ENCODE measurements at regions of chr5 and their contacts with region 1.

Region 1: GRCh38 chr5:39714036-39714698 is 289.4 kb upstream of the DAB2 start:
- DNase-seq: peak; percentile 52
- ATAC-seq: peak; percentile 51
- H3K4me3 Mint-ChIP-seq: no peak overlapping the region
- H3K27ac Mint-ChIP-seq: no peak overlapping the region
- H3K4me1 Mint-ChIP-seq: no peaks in the 10 kb centered on the region
- H3K27me3 Mint-ChIP-seq: peaks cover 8% of the 10 kb centered on the region

Region 2: GRCh38 chr5:38060354-38060753 is 1653.8 kb before region 1 on chr5:
- CTCF ChIA-PET with region 1: no interaction called
- POLR2A ChIA-PET with region 1: no interaction called
- intact Hi-C with region 1: no loop called
- DNase-seq: no peak
- ATAC-seq: no peak
- H3K4me3 Mint-ChIP-seq: no peak overlapping the region
- H3K27ac Mint-ChIP-seq: no peak overlapping the region
- H3K4me1 Mint-ChIP-seq: no peaks in the 10 kb centered on the region
- H3K27me3 Mint-ChIP-seq: no peaks in the 10 kb centered on the region

Region 3: DNA sequence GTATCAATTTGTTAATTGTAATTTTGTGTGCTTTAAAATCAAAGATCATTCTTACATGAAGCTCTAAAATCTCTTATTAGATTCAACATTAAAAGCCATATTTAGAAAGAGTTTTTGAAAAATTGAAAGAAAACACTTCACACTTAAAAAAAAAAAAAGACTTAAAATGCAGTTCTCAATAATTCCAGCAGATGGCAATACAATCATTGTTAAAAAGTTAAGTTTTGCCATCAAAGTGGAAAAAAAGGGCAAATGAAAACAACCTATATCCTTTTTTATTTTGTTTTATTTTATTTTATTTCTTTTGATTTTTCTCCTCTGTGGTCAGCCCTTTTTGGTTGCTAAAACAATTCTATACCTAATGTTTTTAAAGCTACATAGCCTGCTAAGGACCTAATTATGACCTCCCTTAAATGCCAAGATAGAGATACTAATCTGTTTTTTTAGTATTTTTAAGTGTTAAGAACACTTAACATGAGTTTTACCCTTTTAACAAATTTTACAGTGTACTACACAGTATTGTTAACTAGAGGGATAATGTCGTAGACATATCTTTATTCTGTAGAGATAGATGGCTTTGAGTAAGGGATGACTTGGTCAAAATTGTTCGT is 135.2 kb before region 1 on chr5:
- CTCF ChIA-PET with region 1: interaction called, 5 read pairs
- POLR2A ChIA-PET with region 1: no interaction called
- intact Hi-C with region 1: loop called in 1 of 2 experiments (anchors 5 kb)
- DNase-seq: no peak
- ATAC-seq: no peak
- H3K4me3 Mint-ChIP-seq: no peak overlapping the region
- H3K27ac Mint-ChIP-seq: no peak overlapping the region
- H3K4me1 Mint-ChIP-seq: peaks cover 8% of the 10 kb centered on the region
- H3K27me3 Mint-ChIP-seq: no peaks in the 10 kb centered on the region

Region 4: GRCh38 chr5:39948867-39949468 is 234.8 kb after region 1 on chr5:
- CTCF ChIA-PET with region 1: interaction called, 5 read pairs
- POLR2A ChIA-PET with region 1: no interaction called
- intact Hi-C with region 1: loop called (anchors 5 to 10 kb)
- DNase-seq: peak; percentile 70
- ATAC-seq: peak; percentile 97
- H3K4me3 Mint-ChIP-seq: no peak overlapping the region
- H3K27ac Mint-ChIP-seq: no peak overlapping the region
- H3K4me1 Mint-ChIP-seq: peaks cover 5% of the 10 kb centered on the region
- H3K27me3 Mint-ChIP-seq: no peaks in the 10 kb centered on the region